Activated CD8-positive, alpha-beta T cell treated with anti-CD3 and anti-CD28 coated beads for 36 hours (primary cell): ENCODE measurements at regions of chr9 and their contacts with region 1.

Region 1: GRCh38 chr9:6703898-6704639 is 53.7 kb upstream of the KDM4C start:
- DNase-seq: peak; percentile 92
- ATAC-seq: peak; percentile 86
- H3K4me3 Mint-ChIP-seq: peak overlapping the region; percentile 94
- H3K27ac Mint-ChIP-seq: peak overlapping the region; percentile 91
- H3K4me1 Mint-ChIP-seq: peaks cover 11% of the 10 kb centered on the region
- H3K27me3 Mint-ChIP-seq: no peaks in the 10 kb centered on the region
- CTCF ChIP-seq: no peak

Region 2: DNA sequence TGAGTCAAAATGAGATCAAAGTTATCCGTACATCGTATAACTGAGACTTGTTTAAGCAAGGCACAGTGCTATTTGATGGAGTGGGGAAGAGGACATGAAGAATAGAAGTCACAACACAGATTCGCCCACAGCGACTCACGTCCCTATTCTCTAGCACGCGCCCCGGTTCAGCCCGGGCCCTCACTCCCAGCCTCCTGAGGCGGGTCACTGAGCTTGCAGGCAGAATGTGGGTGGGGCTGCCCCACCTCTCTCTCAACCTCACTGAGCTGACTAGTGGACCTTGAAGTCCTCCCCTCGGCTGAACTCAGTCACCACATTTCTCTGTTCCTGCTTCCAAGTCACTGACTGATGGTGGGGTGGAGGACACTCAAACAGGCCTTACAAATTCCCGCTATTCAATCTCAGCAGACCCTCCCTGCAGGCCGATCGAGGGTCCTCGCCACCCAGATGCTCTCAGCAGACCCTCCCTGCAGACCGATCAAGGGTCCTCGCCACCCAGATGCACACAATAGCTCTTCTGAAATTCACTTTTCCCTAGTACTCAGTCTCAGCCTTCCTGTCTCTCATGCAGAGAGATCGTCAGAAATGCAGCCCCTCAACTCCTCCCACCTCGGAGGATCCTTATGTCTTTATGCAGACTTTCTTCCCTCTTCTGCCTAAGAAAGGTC is 71.4 kb before region 1 on chr9:
- CTCF ChIA-PET with region 1: no interaction called
- POLR2A ChIA-PET with region 1: no interaction called
- intact Hi-C with region 1: no loop called
- DNase-seq: no peak
- ATAC-seq: no peak
- H3K4me3 Mint-ChIP-seq: no peak overlapping the region
- H3K27ac Mint-ChIP-seq: no peak overlapping the region
- H3K4me1 Mint-ChIP-seq: no peaks in the 10 kb centered on the region
- H3K27me3 Mint-ChIP-seq: peaks cover 4% of the 10 kb centered on the region
- CTCF ChIP-seq: no peak

Region 3: DNA sequence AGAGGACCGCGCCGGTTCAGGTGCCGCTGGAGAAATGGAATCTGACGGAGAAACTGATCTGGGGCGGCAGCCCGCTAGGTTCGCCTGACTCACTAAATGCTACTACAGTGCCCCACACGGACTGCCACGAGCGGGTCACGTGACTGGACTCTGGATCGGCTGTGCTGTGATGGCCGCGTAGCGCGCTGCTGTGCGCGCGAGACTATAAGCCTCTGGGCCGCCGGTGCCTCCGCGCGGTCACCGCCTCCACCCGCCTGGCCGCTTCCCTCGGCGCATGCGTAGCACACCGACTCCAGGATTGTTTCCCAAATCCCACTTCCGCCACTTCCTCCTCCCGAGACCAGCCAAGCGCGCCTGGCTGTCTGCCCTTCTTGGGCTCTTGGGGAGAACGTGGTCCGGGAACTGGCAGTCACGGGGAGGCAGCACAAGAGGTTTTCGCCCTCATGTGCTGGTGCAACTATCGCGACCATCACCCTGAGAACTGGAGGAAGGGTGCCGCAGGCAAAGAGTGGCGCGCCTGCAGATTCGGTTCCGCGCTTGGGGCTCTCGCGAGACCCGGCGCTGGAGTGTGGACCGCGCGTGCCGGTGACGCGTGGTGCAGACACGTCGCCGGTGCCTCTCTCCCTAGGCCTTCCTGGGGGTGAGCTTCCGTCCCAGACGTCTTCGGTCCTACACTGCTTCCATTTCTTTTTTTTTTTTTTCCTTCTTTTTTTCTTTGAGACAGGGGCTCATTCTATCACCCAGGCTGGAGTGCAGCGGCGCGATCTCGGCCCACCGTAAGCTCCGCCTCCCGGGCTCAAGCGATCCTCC is 22.7 kb before region 1 on chr9:
- CTCF ChIA-PET with region 1: interaction called, 3 read pairs
- POLR2A ChIA-PET with region 1: interaction called, 30 read pairs
- intact Hi-C with region 1: no loop called
- DNase-seq: peak; percentile 97
- ATAC-seq: peak; percentile 87
- H3K4me3 Mint-ChIP-seq: peak overlapping the region; percentile 96
- H3K27ac Mint-ChIP-seq: peak overlapping the region; percentile 100
- H3K4me1 Mint-ChIP-seq: peaks cover 17% of the 10 kb centered on the region
- H3K27me3 Mint-ChIP-seq: no peaks in the 10 kb centered on the region
- CTCF ChIP-seq: no peak

Region 4: GRCh38 chr9:6715755-6716643 is 11.9 kb after region 1 on chr9:
- CTCF ChIA-PET with region 1: interaction called, 3 read pairs
- POLR2A ChIA-PET with region 1: interaction called, 43 read pairs
- intact Hi-C with region 1: no loop called
- DNase-seq: peak; percentile 86
- ATAC-seq: peak; percentile 91
- H3K4me3 Mint-ChIP-seq: peak overlapping the region; percentile 86
- H3K27ac Mint-ChIP-seq: peak overlapping the region; percentile 93
- H3K4me1 Mint-ChIP-seq: peaks cover 4% of the 10 kb centered on the region
- H3K27me3 Mint-ChIP-seq: no peaks in the 10 kb centered on the region
- CTCF ChIP-seq: no peak

Region 5: GRCh38 chr9:6757456-6758247 is 53.6 kb after region 1 on chr9 and contains the start of gene KDM4C:
- CTCF ChIA-PET with region 1: no interaction called
- POLR2A ChIA-PET with region 1: interaction called, 27 read pairs
- intact Hi-C with region 1: no loop called
- DNase-seq: peak; percentile 96
- ATAC-seq: peak; percentile 86
- H3K4me3 Mint-ChIP-seq: peak within 1 kb of the TSS; percentile 96
- H3K27ac Mint-ChIP-seq: peak within 1 kb of the TSS; percentile 99
- H3K4me1 Mint-ChIP-seq: peaks cover 25% of the 10 kb centered on the region
- H3K27me3 Mint-ChIP-seq: no peaks in the 10 kb centered on the region
- CTCF ChIP-seq: no peak
- total RNA-seq, gene KDM4C: 31.1 to 32.9 TPM

Region 6: DNA sequence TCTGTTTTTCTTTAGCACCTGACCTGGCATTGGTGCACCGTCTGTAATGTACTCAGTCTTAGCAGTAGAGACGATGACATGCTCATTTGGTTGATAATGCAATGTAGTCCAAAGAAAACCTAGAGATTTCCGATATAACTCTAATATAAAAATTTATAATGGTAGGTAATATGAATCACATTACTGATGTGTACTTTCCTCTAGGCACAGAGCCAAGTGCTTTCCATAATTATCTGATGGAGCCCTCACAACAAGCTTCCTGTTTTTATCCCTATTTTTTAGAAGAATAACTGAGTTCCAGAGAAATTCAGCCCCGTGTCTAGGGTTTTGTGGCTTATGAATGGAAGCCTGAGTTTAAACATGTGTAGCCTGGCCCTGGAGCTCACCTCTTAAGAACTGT is 107.4 kb after region 1 on chr9:
- CTCF ChIA-PET with region 1: no interaction called
- POLR2A ChIA-PET with region 1: no interaction called
- intact Hi-C with region 1: no loop called
- DNase-seq: no peak
- ATAC-seq: no peak
- H3K4me3 Mint-ChIP-seq: no peak overlapping the region
- H3K27ac Mint-ChIP-seq: no peak overlapping the region
- H3K4me1 Mint-ChIP-seq: peaks cover 3% of the 10 kb centered on the region
- H3K27me3 Mint-ChIP-seq: no peaks in the 10 kb centered on the region
- CTCF ChIP-seq: no peak